T-cell (primary cell): ENCODE measurements at regions of chr5 and their contacts with region 1.

Region 1: DNA sequence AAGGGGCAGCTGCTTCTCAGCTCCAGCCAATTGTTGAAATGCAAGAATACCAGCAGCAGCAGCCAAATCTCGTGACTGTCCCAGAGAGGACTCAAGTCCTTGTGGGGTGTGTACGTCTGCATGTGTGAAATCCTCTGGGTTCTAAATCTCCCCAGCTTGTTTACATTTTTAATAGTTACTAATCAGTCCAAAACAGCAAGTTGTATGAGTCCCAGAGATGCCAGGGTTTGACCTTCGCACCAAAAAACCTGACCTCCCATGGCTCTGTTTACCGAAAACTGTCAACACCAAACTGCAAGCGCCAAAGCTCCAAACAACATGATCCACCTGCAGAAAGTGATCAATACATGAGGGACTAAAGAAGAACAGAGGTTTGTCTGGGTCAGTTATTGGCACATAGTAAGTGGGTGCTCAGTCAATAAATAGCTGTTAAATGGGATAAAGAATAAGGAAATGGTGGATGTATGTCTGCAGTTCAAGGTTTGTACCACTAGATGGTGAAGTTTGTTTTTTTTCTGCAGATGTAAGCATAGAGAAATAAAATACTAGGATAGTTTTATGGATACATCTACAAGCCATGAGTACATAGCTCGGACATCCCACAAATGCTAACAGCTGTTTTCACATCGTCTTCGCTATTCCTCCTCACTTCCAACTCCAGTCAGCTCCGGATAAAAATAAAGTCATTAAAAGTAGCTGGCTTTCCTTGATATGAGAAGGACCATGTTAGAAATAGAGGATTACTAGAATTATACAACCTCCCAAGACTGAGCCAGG is 85.3 kb upstream of the ADRB2 start:
- DNase-seq: peak in 2 of 35 experiments; percentile 20 to 70
- ATAC-seq: no peak
- H3K4me3 ChIP-seq: no peak overlapping the region
- H3K4me3 Mint-ChIP-seq: no peak overlapping the region
- H3K27ac ChIP-seq: no peak overlapping the region
- H3K27ac Mint-ChIP-seq: no peak overlapping the region
- H3K4me1 ChIP-seq: no peaks in the 10 kb centered on the region
- H3K4me1 Mint-ChIP-seq: no peaks in the 10 kb centered on the region
- H3K27me3 ChIP-seq: peaks cover 0 to 2% of the 10 kb centered on the region in 2 experiments
- H3K27me3 Mint-ChIP-seq: peaks cover 14 to 17% of the 10 kb centered on the region in 2 donors

Region 2: DNA sequence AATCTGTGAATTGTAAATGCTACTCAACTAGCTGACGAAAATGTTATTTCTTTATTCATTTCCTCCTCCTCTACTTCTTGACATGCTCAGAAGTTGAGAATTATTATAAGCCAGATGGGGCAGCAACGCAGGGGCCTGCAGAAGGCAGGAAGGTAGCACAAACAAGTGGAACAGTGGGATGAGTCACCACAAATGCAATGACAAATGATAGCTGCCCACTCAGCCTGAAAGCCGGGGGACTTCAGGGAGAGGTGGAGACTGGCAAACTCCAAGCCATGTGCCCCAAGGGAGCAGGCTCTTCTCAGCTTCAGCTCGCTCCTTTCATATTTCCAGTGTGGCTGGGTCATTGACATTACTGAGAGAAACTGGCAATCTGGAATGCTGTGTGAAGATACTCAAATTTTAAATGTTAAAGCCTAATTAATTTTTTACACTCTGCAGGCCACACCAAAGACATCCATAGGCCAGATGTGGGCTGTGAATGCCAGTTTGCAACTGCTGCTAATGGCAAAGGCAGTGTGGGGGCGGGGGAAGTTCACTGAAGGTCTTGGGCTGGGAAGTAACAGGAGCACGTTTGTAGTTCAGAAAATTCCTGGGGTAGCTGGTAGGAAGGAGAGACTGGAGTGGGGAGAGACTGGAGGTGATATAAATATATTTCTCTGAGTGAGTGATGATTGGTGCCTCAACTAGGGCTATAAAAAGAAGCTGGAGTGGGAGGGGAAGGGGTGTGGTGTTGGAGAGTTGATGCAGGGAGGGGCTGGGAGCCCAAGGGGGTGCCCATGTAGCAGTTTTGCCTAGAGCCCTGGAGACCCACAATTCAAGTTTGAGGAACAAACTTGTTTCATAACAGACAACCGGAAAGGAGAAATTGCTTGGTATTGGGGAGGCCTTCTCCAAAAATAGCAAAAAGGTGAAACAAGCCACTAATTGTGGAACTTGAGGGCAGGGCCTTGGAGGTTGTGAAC is 64.5 kb after region 1 on chr5:
- CTCF ChIA-PET with region 1: no interaction called
- POLR2A ChIA-PET with region 1: no interaction called
- DNase-seq: no peak
- ATAC-seq: no peak
- H3K4me3 ChIP-seq: no peak overlapping the region
- H3K4me3 Mint-ChIP-seq: no peak overlapping the region
- H3K27ac ChIP-seq: no peak overlapping the region
- H3K27ac Mint-ChIP-seq: no peak overlapping the region
- H3K4me1 ChIP-seq: peaks cover 13 to 14% of the 10 kb centered on the region in 2 experiments
- H3K4me1 Mint-ChIP-seq: peaks cover 26 to 38% (median 29%) of the 10 kb centered on the region in 3 donors
- H3K27me3 ChIP-seq: no peaks in the 10 kb centered on the region
- H3K27me3 Mint-ChIP-seq: peaks cover 0 to 7% of the 10 kb centered on the region in 2 donors

Region 3: DNA sequence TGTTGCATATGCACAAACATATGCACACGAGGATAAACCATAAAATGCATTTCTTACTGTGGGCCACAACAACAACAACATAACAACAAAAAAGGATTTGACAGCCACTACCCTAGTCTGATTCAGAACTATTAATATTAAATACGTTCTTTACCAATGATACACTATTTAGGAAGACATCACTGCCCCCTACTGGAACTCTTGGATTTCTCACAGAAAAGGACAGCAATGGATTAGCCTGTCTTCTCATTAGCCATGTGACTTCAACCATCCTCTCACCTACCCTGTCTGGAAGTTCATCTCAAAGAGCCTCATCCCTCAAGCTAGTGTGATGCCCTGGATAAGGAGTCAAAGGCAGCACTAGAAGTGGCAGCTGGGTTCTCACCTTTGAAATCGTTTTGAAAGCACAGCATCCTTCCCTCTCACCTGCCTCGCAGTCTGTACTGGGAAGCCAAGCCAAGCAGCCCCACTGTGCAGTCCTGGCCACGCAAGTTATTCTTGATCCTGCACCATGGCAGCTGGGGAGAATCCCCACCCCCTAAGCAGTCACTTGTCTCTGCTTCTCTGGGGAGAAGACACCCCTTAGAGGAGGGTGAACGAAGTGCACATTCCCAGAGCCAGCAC is 257.1 kb after region 1 on chr5:
- CTCF ChIA-PET with region 1: interaction called, 4 to 17 read pairs
- POLR2A ChIA-PET with region 1: no interaction called
- DNase-seq: peak in 13 of 35 experiments; percentile 2 to 71 (median 20)
- ATAC-seq: peak in 1 of 4 experiments; percentile 37
- H3K4me3 ChIP-seq: no peak overlapping the region
- H3K4me3 Mint-ChIP-seq: no peak overlapping the region
- H3K27ac ChIP-seq: no peak overlapping the region
- H3K27ac Mint-ChIP-seq: no peak overlapping the region
- H3K4me1 ChIP-seq: no peaks in the 10 kb centered on the region
- H3K4me1 Mint-ChIP-seq: no peaks in the 10 kb centered on the region
- H3K27me3 ChIP-seq: peaks cover 0 to 2% of the 10 kb centered on the region in 2 experiments
- H3K27me3 Mint-ChIP-seq: peaks cover 16 to 44% of the 10 kb centered on the region in 2 donors

Region 4: GRCh38 chr5:149035372-149035790 is 294.2 kb after region 1 on chr5:
- CTCF ChIA-PET with region 1: interaction called, 35 to 138 read pairs
- POLR2A ChIA-PET with region 1: no interaction called
- DNase-seq: peak; percentile 14 to 76 (median 56)
- ATAC-seq: peak; percentile 56 to 81 (median 64)
- H3K4me3 ChIP-seq: no peak overlapping the region
- H3K4me3 Mint-ChIP-seq: no peak overlapping the region
- H3K27ac ChIP-seq: no peak overlapping the region
- H3K27ac Mint-ChIP-seq: no peak overlapping the region
- H3K4me1 ChIP-seq: no peaks in the 10 kb centered on the region
- H3K4me1 Mint-ChIP-seq: peaks cover 13 to 27% (median 17%) of the 10 kb centered on the region in 3 donors
- H3K27me3 ChIP-seq: peaks cover 0 to 9% of the 10 kb centered on the region in 2 experiments
- H3K27me3 Mint-ChIP-seq: no peaks in the 10 kb centered on the region

Region 5: DNA sequence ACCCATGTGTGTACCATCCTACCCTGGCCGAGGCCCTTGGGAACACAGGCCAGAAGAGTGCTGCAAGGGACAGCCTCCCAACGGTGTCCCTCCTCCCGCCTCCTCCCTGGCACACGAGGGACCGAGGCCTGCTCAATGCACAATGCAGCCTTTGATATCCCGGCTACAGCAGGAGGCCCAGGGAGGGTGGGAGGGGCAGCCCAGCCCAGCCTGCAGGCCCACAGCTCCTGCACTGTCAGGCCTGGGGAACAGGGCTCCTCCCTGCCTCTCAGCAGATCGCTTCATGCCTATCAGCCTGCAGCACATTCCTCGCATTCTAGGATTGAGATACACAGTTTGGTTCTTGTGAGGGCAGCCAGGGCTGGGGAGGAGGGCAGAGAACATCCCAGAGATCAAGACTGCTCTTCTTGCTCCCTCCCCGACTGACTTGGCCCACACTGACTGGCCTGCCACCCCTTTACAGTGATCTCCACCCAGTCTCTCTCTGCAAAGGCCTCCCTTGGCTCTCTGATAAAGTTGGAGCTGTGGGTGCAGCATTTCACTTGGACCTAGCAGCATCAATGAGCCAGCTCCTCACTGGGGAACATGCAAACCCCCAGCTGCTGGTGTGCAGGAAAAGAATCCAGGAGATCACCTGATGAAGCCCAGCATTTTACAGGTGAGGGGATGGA is 322.0 kb after region 1 on chr5 and contains the start of gene SH3TC2:
- CTCF ChIA-PET with region 1: no interaction called
- POLR2A ChIA-PET with region 1: no interaction called
- DNase-seq: no peak
- ATAC-seq: peak in 1 of 4 experiments; percentile 31
- H3K4me3 ChIP-seq: no peak within 1 kb of the TSS
- H3K4me3 Mint-ChIP-seq: no peak within 1 kb of the TSS
- H3K27ac ChIP-seq: no peak within 1 kb of the TSS
- H3K27ac Mint-ChIP-seq: no peak within 1 kb of the TSS
- H3K4me1 ChIP-seq: no peaks in the 10 kb centered on the region
- H3K4me1 Mint-ChIP-seq: no peaks in the 10 kb centered on the region
- H3K27me3 ChIP-seq: peaks cover 0 to 4% of the 10 kb centered on the region in 2 experiments
- H3K27me3 Mint-ChIP-seq: peaks cover 8 to 15% of the 10 kb centered on the region in 2 donors
- total RNA-seq, gene SH3TC2: not detected

Region 6: DNA sequence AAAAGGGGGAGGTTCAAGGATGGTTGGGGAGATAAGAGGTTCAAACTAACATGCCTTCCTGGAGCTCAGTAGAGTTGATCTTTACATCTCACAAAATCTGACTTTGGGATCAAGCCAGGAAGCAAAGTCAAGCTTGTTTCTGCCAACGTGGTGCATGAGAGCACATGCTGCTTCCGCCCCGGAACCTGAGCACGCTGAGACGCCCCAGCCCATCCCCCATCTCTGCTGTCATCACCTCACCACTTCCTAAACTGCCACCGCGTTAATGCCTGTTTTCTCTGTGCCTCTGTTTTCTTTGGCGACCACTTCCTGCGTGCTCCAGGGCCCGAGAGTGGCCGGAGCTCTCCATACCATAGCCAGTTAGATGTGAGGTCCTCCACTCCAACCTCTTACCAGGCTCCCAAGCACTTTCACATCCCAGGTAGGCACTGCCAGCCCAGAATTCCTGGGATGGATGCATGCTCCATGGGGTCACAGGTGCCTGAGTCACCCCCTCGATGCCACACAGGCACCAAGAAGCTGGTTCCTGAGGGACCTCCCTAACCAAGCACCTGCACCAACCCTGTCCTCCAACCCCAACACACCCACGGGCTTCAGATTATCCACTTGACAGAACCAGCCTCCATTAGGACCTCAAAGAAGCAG is 499.3 kb after region 1 on chr5:
- CTCF ChIA-PET with region 1: no interaction called
- POLR2A ChIA-PET with region 1: no interaction called
- DNase-seq: peak; percentile 55 to 93 (median 84)
- ATAC-seq: peak; percentile 94 to 99 (median 98)
- H3K4me3 ChIP-seq: peak overlapping the region in 1 of 2 donors; percentile 17
- H3K4me3 Mint-ChIP-seq: peak overlapping the region; percentile 21 to 81 (median 54)
- H3K27ac ChIP-seq: peak overlapping the region; percentile 86
- H3K27ac Mint-ChIP-seq: peak overlapping the region; percentile 82 to 90
- H3K4me1 ChIP-seq: peaks cover 23 to 28% of the 10 kb centered on the region in 2 experiments
- H3K4me1 Mint-ChIP-seq: peaks cover 50 to 77% (median 59%) of the 10 kb centered on the region in 3 donors
- H3K27me3 ChIP-seq: peaks cover 0 to 25% of the 10 kb centered on the region in 2 experiments
- H3K27me3 Mint-ChIP-seq: no peaks in the 10 kb centered on the region